Motor neuron (in vitro differentiated cells): ENCODE measurements at regions of chr7 and their contacts with region 1.

Region 1: GRCh38 chr7:85186521-85187241 is at the start of gene SEMA3D:
- ATAC-seq: peak; percentile 94 to 96 (median 94)
- H3K4me3 ChIP-seq: peak within 1 kb of the TSS; percentile 51 to 81 (median 61)
- H3K27ac ChIP-seq: peak within 1 kb of the TSS in 1 of 2 donors; percentile 31
- H3K4me1 ChIP-seq: peaks cover 6 to 9% of the 10 kb centered on the region in 2 donors
- total RNA-seq, gene SEMA3D: 0.66 to 14.6 (median 3.0) TPM

Region 2: DNA sequence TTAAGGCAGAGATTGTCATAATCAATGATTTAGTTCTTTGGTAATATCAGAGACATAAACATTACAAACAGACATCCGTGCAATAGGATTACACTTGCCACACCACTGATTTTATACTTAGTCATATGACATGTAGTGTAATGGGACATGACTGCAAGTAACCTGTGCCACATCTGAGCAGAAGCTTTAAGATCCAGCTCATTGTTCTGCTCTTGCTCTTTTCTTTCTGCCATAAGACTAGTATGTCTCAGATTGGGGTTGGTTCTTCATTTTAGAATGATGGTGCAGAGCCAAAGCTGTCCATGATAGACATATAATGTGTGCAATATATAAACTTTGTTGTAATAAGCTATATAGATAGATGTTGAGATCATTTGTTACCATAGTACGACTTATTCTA is 872.4 kb before region 1 on chr7:
- in situ Hi-C with region 1: no loop called
- ATAC-seq: no peak
- H3K4me3 ChIP-seq: no peak overlapping the region
- H3K27ac ChIP-seq: no peak overlapping the region
- H3K4me1 ChIP-seq: no peaks in the 10 kb centered on the region

Region 3: GRCh38 chr7:85041605-85042216 is 145.0 kb before region 1 on chr7:
- in situ Hi-C with region 1: loop called in 1 of 9 experiments (anchors 25 kb)
- ATAC-seq: peak; percentile 42 to 92 (median 74)
- H3K4me3 ChIP-seq: no peak overlapping the region
- H3K27ac ChIP-seq: no peak overlapping the region
- H3K4me1 ChIP-seq: peaks cover 0 to 5% of the 10 kb centered on the region in 2 donors

Region 4: DNA sequence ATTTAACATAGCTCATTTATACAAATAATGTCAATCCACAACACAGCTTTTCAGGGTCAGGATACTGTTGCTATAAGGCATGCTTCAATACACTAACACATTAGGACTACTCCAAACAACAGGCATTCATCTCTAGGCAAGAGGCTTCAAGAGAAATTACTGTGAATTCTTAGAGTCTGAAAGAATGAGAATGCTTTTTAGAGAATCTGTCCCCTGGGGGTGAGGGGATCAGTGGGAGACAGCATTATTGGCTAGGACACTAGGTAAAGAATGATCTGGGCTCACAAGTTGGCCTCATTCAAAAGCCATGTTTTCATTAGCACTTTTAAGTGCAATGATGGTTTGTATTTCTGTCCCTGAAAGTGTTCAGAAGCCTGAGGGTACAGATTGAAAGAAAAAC is 132.4 kb before region 1 on chr7:
- in situ Hi-C with region 1: loop called in 2 of 9 experiments (anchors 10 to 25 kb)
- ATAC-seq: peak in 4 of 8 experiments; percentile 21 to 93 (median 42)
- H3K4me3 ChIP-seq: no peak overlapping the region
- H3K27ac ChIP-seq: no peak overlapping the region
- H3K4me1 ChIP-seq: peaks cover 8 to 10% of the 10 kb centered on the region in 2 donors

Region 5: GRCh38 chr7:85471740-85472139 is 285.1 kb after region 1 on chr7:
- in situ Hi-C with region 1: loop called in 2 of 9 experiments (anchors 25 kb)
- ATAC-seq: no peak
- H3K4me3 ChIP-seq: no peak overlapping the region
- H3K27ac ChIP-seq: no peak overlapping the region
- H3K4me1 ChIP-seq: peaks cover 0 to 4% of the 10 kb centered on the region in 2 donors

Region 6: GRCh38 chr7:85529197-85529596 is 342.5 kb after region 1 on chr7:
- in situ Hi-C with region 1: loop called in 2 of 9 experiments (anchors 25 kb)
- ATAC-seq: peak in 2 of 8 experiments; percentile 45 to 77
- H3K4me3 ChIP-seq: no peak overlapping the region
- H3K27ac ChIP-seq: no peak overlapping the region
- H3K4me1 ChIP-seq: peaks cover 0 to 4% of the 10 kb centered on the region in 2 donors

Region 7: DNA sequence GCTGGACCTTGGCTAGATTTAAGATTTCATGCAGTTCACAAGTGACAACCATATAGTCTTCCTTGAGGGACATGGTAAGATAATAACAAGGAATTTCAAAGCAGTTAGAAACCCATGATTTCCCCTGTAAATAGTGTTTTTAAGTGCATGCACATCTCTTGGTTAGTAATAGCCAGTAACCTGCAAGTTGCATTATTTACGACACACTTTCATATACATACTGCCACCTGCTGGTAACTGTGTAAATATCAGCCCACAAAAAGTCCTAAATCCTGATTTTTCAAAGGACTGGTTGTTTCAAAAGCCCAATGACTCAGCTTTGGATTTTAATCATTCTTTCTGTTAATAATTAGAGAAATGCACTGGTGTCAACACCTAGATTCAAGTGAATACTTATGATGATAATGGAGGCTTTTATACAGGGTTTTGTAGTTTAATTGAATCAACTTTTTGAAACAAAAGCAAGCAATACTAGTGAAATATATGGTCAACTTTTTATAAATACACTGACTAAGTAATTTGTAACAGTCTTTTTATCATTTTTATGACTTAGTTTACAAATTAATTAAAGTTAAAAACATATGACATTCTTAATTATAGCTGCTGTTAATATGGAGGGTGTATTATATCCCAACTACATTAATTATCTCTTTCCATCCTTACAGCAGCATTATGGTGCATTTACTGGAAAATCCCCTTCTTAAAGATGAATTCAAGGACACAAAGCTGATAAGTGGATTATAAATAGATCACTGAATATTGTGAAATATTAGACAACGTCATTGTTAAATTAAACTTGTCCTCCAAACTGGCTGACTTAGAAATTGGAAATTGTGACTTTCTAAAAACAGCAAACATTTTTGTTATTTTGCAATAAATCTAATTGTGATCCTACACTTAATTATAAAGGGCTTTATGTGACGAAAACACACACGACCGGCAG is 367.8 kb after region 1 on chr7:
- in situ Hi-C with region 1: loop called in 3 of 9 experiments (anchors 25 kb)
- ATAC-seq: peak in 7 of 8 experiments; percentile 34 to 63 (median 52)
- H3K4me3 ChIP-seq: no peak overlapping the region
- H3K27ac ChIP-seq: no peak overlapping the region
- H3K4me1 ChIP-seq: no peaks in the 10 kb centered on the region

Region 8: DNA sequence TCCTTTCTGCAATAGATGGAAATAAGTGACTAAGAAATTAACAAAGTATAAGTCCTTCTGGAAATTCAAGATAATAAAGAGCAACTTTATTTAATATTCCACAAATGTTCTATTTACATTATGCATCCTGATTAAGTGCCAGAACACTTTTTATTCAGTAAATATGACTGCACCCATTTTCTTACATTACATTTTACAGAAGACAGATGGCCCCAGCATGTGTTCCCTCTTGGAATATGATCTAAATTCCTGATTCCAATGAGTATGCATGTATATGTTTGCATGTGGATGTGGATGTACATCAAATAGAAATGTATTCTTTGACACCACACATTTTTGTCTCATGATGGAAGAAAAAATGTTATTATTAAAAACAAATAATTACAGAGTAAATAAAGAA is 628.8 kb after region 1 on chr7:
- in situ Hi-C with region 1: no loop called
- ATAC-seq: peak in 2 of 8 experiments; percentile 73 to 77
- H3K4me3 ChIP-seq: no peak overlapping the region
- H3K27ac ChIP-seq: no peak overlapping the region
- H3K4me1 ChIP-seq: no peaks in the 10 kb centered on the region

Region 9: DNA sequence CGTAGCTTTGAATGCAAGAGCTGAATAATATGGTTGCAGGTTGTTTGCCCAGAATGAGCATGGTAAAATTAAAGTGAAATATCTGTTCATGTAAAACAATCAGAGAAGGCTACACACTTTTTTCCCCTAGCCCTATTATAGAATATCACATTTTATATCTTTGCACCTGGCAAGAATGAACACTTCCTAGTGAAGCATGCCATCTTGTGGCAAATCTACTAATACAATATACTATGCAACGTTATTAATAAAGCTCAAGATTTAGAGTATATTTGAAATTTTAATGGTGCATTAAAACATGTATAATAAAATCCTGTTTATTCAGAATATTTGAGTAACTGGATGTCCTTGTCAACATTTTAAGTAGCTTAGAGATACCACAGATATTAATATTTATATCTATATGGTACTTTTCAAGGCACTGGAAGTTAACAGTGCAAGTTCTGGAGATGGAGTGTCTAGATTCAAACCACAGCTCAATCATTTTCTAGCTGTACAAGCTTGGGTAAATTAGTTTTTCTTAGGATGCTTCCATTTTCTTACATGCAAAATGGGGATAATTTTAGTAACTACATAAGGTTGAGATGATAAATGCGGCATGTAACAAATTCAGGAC is 643.2 kb after region 1 on chr7:
- in situ Hi-C with region 1: loop called in 3 of 9 experiments (anchors 25 kb)
- ATAC-seq: peak in 6 of 8 experiments; percentile 33 to 79 (median 56)
- H3K4me3 ChIP-seq: no peak overlapping the region
- H3K27ac ChIP-seq: no peak overlapping the region
- H3K4me1 ChIP-seq: no peaks in the 10 kb centered on the region